ENCODE measurements at regions of chr10 and their contacts with region 1.

Region 1: GRCh38 chr10:80599424-80599847 is 61.7 kb downstream of the SH2D4B start:
- H3K4me3 ChIP-seq: no peak overlapping the region
- H3K27ac ChIP-seq: no peak overlapping the region
- H3K4me1 ChIP-seq: no peaks in the 10 kb centered on the region
- CTCF ChIP-seq: peak; percentile 71

Region 2: GRCh38 chr10:80583685-80584084 is 15.8 kb before region 1 on chr10:
- CTCF ChIA-PET with region 1: interaction called, 16 read pairs
- POLR2A ChIA-PET with region 1: no interaction called
- H3K4me3 ChIP-seq: no peak overlapping the region
- H3K27ac ChIP-seq: no peak overlapping the region
- H3K4me1 ChIP-seq: no peaks in the 10 kb centered on the region
- CTCF ChIP-seq: no peak

Region 3: GRCh38 chr10:80619036-80619435 is 19.6 kb after region 1 on chr10:
- CTCF ChIA-PET with region 1: interaction called, 13 read pairs
- POLR2A ChIA-PET with region 1: no interaction called
- H3K4me3 ChIP-seq: no peak overlapping the region
- H3K27ac ChIP-seq: no peak overlapping the region
- H3K4me1 ChIP-seq: no peaks in the 10 kb centered on the region
- CTCF ChIP-seq: no peak

Region 4: DNA sequence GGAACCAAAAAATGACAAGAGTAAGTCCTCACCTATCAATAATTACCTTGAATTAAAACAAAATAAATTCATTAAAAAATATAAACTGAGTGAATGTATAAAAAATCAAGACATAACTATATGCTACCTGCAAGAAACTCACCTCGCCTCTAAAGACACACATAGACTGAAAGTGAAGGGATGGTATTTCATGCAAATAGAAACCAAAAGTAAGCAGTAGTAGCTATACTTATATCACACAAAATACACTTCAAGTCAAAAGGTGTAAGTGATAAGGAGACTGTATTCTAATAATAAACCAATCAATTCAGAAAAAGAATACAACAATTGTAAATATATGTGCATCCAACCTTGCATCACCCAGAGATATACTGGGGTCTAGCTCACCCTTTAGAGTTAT is 270.8 kb after region 1 on chr10:
- CTCF ChIA-PET with region 1: no interaction called
- POLR2A ChIA-PET with region 1: no interaction called
- H3K4me3 ChIP-seq: no peak overlapping the region
- H3K27ac ChIP-seq: no peak overlapping the region
- H3K4me1 ChIP-seq: no peaks in the 10 kb centered on the region
- CTCF ChIP-seq: no peak

Measured in HEK293 (cell line).